ENCODE measurements at regions of chr12 and their contacts with region 1.

Region 1: DNA sequence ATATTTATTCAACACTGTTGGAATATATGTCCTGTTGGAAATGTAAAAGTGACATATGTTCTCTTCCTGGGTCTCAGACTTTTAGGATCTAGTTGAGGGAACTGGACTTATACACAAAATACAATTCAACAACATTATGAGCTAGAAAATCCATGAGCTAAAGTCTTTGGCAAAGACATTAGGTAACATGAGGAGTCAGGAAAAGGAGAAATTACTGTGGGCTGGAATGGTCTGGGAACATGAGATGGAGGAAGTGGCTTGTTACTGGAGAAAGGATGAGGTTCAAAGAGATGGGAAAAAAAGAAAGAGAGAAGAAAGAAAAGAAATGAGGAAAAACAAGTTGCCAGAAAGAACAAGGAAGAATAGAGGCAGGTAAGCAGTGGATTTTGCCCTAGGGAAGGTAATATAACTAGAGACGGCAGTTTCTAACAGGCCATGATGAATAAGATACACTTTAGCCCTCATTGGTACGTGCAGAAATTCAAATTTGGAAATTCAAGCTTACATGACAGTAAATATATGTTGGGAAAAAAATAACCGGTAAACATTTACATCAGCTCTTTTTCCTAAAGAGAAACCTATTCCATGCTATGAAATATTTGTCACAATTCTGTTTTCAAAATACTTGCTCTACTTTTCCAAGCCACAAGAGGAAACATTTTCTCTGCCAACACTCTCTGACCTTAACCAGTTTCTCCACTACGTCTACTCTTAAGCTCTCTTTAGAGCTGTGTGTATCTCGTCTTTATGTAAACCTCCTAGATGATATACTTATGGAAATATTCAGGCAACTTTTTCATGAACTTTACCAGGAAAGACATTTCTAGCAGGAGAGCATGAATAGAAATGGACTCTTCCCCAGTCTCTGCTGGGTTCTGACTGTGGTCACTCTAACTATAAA is 268.8 kb upstream of the BTG1 start:
- DNase-seq: no peak

Region 2: DNA sequence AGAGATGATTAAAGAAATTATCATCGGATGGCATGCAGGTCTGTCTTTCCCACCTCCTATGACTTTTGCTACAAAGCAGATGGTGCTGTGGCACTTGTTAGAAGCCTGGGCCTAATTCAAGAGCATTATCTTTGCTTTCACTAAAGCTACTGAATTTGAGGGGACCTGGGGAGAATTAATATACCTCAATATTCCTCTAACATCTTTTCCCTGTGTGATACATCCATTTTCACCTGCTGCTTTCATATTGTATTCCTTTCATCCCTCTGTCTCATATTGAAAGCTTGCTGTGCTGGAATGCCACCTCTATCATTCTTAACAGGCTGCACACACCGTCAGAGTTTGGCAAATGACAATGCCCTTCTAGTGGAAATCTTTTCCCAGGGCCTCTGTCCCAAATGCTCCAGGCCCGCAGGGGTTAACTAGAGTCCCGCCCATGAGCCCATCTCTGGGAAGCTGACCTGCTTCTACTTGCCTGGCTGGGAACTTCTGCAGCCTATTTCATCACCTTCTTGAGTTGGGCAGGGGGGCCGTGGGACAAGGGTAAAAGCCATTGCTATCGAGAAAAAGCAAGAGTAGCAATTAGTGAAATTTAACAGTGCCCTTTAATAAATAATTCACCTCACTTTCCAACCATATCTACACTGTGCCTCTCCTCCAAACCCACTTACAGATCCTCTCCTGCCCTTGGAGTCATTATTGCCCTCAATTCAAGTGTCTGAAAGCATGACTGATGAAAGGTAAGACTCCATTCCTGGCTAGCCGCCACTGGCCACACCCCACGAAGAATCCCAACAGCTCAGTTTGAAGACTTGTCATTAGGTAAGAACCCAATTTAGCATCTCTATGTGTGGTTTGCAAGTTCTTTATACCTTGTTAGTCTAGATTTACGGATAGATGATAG is 142.1 kb before region 1 on chr12:
- intact Hi-C with region 1: no loop called
- DNase-seq: no peak

Region 3: GRCh38 chr12:92304371-92305055 is 109.9 kb before region 1 on chr12:
- intact Hi-C with region 1: loop called (anchors 10 kb)
- DNase-seq: no peak

Region 4: GRCh38 chr12:92445253-92446082 is 31.0 kb after region 1 on chr12:
- intact Hi-C with region 1: loop called (anchors 2 kb)
- DNase-seq: no peak

Region 5: GRCh38 chr12:92551853-92552397 is 137.5 kb after region 1 on chr12:
- intact Hi-C with region 1: no loop called
- DNase-seq: no peak